B cell (primary cell): ENCODE measurements at regions of chr2 and their contacts with region 1.

Region 1: DNA sequence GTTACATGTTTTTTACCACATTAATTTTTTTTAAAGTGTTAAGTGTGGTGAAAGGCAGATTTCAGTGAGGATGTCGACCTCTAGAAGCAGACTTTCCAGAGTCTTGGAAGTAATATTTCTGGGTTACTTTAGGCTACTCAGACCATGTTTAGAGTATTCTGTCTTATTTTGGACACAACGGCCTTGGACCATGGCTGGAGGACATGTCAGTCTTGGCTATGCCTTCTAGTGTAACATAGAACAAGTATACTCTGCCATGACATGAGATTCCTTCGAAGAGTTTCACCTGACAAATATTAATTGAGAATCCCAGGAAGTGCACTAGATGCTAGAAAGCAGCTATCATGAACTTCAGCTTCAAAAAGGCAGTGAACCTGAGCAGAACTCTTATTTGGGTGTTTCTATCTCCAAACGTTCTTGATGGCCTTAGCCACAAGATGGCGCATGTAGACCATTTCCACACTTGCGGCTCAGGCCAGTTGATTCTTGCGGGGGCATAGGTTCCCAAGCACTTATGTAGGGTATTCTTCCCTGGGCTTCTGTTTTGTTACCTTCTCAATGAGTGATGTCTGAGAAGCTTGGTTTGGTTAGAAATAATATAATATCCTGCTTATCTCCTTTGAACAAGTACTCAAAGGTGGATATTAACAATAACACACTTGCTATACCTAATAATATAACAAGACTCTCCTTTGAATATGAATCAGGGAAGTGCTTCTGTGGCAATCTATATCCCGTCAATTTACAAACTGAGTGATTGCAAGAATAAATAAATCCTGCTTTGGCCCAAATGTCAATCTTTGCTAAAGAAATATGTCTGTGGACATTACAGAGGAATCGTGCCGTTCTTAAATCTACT is 62.0 kb downstream of the CACNB4 start:
- DNase-seq: peak; percentile 72
- ATAC-seq: peak; percentile 58
- H3K4me3 ChIP-seq: no peak overlapping the region
- H3K4me3 Mint-ChIP-seq: no peak overlapping the region
- H3K27ac ChIP-seq: no peak overlapping the region
- H3K27ac Mint-ChIP-seq: no peak overlapping the region
- H3K4me1 ChIP-seq: no peaks in the 10 kb centered on the region
- H3K4me1 Mint-ChIP-seq: no peaks in the 10 kb centered on the region
- H3K27me3 ChIP-seq: no peaks in the 10 kb centered on the region
- H3K27me3 Mint-ChIP-seq: no peaks in the 10 kb centered on the region
- CTCF ChIP-seq: peak; percentile 82

Region 2: GRCh38 chr2:151891566-151892194 is 145.2 kb before region 1 on chr2:
- CTCF ChIA-PET with region 1: no interaction called
- POLR2A ChIA-PET with region 1: no interaction called
- intact Hi-C with region 1: no loop called
- DNase-seq: no peak
- ATAC-seq: no peak
- H3K4me3 ChIP-seq: no peak overlapping the region
- H3K4me3 Mint-ChIP-seq: no peak overlapping the region
- H3K27ac ChIP-seq: no peak overlapping the region
- H3K27ac Mint-ChIP-seq: no peak overlapping the region
- H3K4me1 ChIP-seq: no peaks in the 10 kb centered on the region
- H3K4me1 Mint-ChIP-seq: peaks cover 2% of the 10 kb centered on the region
- H3K27me3 ChIP-seq: no peaks in the 10 kb centered on the region
- H3K27me3 Mint-ChIP-seq: no peaks in the 10 kb centered on the region
- CTCF ChIP-seq: no peak

Region 3: GRCh38 chr2:152740743-152741328 is 704.0 kb after region 1 on chr2:
- CTCF ChIA-PET with region 1: no interaction called
- POLR2A ChIA-PET with region 1: no interaction called
- intact Hi-C with region 1: loop called (anchors 10 kb)
- DNase-seq: peak; percentile 56
- ATAC-seq: peak; percentile 72
- H3K4me3 ChIP-seq: no peak overlapping the region
- H3K4me3 Mint-ChIP-seq: no peak overlapping the region
- H3K27ac ChIP-seq: no peak overlapping the region
- H3K27ac Mint-ChIP-seq: no peak overlapping the region
- H3K4me1 ChIP-seq: no peaks in the 10 kb centered on the region
- H3K4me1 Mint-ChIP-seq: no peaks in the 10 kb centered on the region
- H3K27me3 ChIP-seq: no peaks in the 10 kb centered on the region
- H3K27me3 Mint-ChIP-seq: no peaks in the 10 kb centered on the region
- CTCF ChIP-seq: peak; percentile 97